ENCODE measurements at regions of chr6 and their contacts with region 1.

Region 1: GRCh38 chr6:31806465-31807272 is at the start of gene LSM2:
- H3K4me3 ChIP-seq: peak within 1 kb of the TSS; percentile 91
- H3K27ac ChIP-seq: peak within 1 kb of the TSS; percentile 65
- H3K4me1 ChIP-seq: no peaks in the 10 kb centered on the region
- CTCF ChIP-seq: peak; percentile 96

Region 2: GRCh38 chr6:31541658-31542521 is 264.8 kb before region 1 on chr6 and contains the start of gene DDX39B:
- CTCF ChIA-PET with region 1: no interaction called
- POLR2A ChIA-PET with region 1: interaction called, 11 read pairs
- H3K4me3 ChIP-seq: peak within 1 kb of the TSS; percentile 64
- H3K27ac ChIP-seq: peak within 1 kb of the TSS; percentile 100
- H3K4me1 ChIP-seq: peaks cover 14% of the 10 kb centered on the region
- CTCF ChIP-seq: no peak

Region 3: DNA sequence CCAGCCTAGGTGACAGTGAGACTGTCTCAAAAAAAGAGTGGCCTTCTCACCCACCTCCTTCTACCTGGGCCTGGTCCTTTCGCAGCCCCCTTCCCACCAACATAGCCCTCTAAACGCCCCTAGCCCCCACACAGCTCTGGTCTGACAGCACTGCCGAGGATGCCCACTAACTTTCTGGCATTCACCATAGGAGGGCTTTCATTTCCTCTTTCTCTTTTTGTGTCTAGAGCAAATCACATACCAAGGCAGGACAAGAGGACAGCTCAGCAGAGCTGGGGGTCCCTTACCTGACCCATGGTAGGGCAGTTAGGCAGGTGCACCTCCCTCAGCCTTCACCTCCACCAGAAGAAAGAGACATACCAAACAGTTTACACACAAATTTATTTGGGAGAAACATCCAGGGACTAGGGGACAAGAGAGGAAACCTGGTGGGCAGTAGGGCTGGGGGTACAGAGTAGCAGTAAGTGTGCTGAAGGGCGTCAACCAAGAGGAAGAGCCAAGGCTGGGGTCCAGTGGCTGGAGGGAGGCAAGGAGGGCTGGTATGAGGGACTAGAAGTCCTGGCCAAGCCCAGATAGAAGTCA is 130.3 kb before region 1 on chr6:
- CTCF ChIA-PET with region 1: no interaction called
- POLR2A ChIA-PET with region 1: no interaction called
- H3K4me3 ChIP-seq: no peak overlapping the region
- H3K27ac ChIP-seq: no peak overlapping the region
- H3K4me1 ChIP-seq: no peaks in the 10 kb centered on the region; the same call in 1 of the 2 replicates
- CTCF ChIP-seq: no peak

Region 4: DNA sequence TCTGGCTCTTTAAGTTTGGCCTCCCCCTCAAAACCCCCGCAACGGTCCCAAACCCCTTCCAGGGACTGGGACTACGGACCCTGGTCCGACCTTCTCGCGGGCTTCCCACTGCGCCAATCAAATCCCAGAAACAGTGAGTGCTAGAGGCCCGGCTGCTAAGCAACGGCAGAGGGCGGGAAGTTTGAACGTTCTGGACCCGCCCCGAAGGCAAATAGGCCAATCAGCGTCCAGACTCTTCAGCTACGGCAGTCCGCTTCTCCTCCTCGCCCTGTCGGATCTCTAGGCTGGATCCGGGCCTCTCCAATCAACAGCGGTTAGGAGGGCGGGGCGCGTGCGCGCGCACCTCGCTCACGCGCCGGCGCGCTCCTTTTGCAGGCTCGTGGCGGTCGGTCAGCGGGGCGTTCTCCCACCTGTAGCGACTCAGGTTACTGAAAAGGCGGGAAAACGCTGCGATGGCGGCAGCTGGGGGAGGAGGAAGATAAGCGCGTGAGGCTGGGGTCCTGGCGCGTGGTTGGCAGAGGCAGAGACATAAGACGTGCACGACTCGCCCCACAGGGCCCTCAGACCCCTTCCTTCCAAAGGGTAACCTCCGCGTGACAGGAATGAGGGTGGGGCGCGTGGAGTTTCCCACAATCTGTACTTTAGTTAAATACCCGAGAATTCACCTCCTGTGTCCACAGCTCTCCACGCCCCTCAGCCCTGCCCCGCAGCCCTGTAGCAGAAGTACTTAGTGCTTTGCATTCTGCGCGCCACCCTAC is 66.9 kb before region 1 on chr6 and contains the start of gene MSH5:
- CTCF ChIA-PET with region 1: interaction called, 7 read pairs
- POLR2A ChIA-PET with region 1: interaction called, 16 read pairs
- H3K4me3 ChIP-seq: peak within 1 kb of the TSS; percentile 61
- H3K27ac ChIP-seq: peak within 1 kb of the TSS; percentile 87
- H3K4me1 ChIP-seq: peaks cover 29% of the 10 kb centered on the region
- CTCF ChIP-seq: no peak

Region 5: GRCh38 chr6:31776989-31777666 is 29.5 kb before region 1 on chr6 and contains the start of gene VWA7:
- CTCF ChIA-PET with region 1: interaction called, 5 read pairs
- POLR2A ChIA-PET with region 1: interaction called, 10 read pairs
- H3K4me3 ChIP-seq: peak within 1 kb of the TSS; percentile 21
- H3K27ac ChIP-seq: no peak within 1 kb of the TSS
- H3K4me1 ChIP-seq: peaks cover 4% of the 10 kb centered on the region
- CTCF ChIP-seq: no peak

Region 6: DNA sequence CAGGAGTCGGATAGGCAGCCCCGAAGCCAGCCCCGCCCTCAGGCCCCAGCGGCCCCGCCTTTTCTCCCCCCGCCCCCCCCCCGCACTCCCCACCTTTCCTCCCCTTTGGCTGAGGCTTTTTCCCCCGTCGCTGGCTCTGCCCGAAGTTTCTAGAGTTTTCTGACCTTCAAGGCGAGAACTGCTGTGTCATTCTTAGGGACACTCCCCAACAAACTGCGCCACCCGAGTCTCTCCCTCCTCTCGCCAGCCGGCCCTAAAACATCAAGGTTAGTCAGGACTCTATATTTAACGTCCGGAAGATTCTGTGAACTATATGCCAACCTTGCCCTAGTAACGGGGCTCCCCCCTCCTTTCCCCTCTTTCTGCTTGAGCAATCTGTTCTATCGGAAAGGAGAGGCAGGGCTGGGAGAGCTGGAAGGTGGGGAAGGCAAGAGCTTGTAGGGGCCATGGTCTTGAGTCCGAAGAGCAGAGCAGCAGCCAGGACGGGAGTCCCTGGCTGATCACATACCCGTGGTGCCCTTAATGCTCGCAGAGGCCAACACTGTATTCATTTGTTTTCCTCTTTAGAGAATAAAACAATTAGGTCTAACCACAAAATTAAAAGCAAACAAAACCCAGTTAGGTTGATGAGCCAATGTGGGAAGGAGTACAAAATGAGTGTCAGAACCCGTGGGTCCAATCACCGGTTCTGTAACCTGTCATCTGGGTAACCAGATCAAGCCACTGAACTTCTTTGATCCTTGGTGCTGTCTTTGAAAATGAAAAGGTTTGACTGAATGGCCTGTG is 15.6 kb after region 1 on chr6:
- CTCF ChIA-PET with region 1: interaction called, 10 read pairs
- POLR2A ChIA-PET with region 1: interaction called, 206 read pairs
- H3K4me3 ChIP-seq: peak overlapping the region; percentile 42
- H3K27ac ChIP-seq: peak overlapping the region; percentile 12; the same call in 1 of the 2 replicates
- H3K4me1 ChIP-seq: no peaks in the 10 kb centered on the region; the same call in 1 of the 2 replicates
- CTCF ChIP-seq: no peak

Region 7: DNA sequence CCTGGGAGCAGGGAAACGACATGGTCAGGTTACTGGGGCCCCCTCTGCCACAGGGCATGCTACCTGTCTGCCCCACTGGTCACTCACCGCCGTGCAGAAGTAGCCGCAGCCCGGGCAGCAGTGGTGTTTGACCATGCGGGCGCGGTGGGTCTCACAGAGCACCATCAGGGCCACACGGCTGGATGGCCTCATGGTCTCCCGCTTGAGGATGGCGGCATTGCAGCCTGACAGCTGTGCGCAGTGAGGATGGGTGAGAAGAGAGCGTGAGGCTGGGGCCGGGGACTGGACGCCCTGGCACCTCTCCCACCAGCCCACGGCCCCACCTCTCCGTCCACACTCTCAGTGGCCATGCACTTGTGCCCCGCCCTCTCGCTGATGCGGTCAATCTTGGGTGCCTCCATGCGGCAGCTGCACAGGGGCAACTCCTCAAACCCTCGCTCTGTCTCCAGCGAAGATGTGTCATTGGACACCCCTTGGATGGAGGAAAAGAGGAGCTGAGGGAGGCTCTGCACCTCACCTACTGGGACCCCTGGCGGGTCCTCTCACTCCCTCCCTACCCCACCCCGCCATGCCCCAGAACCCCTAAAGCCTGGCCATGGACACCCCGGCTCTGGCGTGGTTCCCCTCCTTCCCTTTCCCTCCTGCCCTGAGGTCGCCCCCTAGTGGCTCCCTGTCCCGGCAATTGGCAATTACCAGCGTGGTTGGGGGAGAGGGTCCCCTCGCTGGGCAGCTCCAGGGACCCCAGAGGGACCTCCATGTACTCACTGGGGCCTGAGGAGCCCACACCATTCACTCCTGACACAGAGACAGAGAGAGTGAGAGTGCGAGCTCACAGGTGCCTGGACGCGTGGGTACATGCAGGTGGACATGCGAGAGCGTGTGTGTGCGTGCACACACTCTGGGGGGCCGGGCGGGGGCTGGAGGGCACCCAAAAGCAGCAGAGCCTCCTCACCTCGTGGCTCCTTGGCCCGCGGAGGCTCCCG is 81.9 kb after region 1 on chr6:
- CTCF ChIA-PET with region 1: no interaction called
- POLR2A ChIA-PET with region 1: interaction called, 12 read pairs
- H3K4me3 ChIP-seq: no peak overlapping the region
- H3K27ac ChIP-seq: no peak overlapping the region
- H3K4me1 ChIP-seq: no peaks in the 10 kb centered on the region
- CTCF ChIP-seq: peak; percentile 63; the same call in 1 of the 2 replicates

Measured in HEK293 (cell line).